Activated B cell treated with CpG ODN at 0.5 μM for 24 hours (primary cell): ENCODE measurements at regions of chr7 and their contacts with region 1.

Region 1: DNA sequence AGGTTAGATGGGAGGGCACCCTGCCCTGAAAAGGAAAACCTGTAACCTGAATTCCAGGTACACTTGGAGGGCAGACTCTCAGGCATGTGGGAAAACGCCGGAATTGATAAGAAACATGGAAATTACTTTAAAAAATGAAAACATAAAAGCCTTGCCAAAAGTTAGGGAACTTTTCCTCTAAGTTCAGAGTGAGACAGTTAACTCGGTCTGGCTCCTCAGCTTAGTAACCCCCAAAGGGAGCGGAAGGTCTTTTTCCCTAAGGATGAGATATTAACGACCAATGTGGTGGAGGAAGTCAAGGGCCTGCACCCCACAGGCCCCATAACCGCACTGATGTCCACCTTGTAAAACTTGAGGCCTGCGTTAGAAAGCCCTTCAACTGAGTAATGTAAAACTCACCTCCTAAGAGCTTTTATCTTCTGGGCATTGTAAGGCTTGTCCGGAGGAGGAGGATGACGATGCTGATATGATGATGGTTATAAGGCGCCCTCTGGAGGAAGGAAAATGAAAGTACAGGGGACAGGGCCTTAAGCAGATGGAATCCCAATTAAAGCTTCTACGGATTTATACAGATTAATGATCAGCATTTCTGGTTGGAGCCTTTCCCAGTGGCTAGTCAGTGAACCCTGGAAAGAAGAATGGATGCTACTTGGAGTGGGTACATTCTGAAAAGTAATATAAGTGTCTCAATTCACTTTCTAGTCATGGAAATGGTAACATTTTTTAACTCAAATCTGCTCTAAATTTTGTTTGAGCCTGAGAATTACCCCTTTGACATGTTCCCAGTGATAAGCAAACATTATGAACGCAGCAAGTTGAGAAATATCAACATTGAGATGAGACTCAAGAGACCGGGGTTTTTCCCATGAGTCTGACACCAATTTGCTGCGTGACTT is 694 bp downstream of the COL1A2 start:
- DNase-seq: no peak
- ATAC-seq: peak; percentile 91
- H3K4me3 Mint-ChIP-seq: peak overlapping the region; percentile 67
- H3K27ac Mint-ChIP-seq: no peak overlapping the region
- H3K4me1 Mint-ChIP-seq: peaks cover 11% of the 10 kb centered on the region
- H3K27me3 Mint-ChIP-seq: peaks cover 30% of the 10 kb centered on the region
- CTCF ChIP-seq: peak; percentile 75

Region 2: GRCh38 chr7:93245525-93246432 is 1149.6 kb before region 1 on chr7:
- CTCF ChIA-PET with region 1: interaction called, 5 read pairs
- POLR2A ChIA-PET with region 1: no interaction called
- intact Hi-C with region 1: loop called (anchors 1 kb)
- DNase-seq: no peak
- ATAC-seq: peak; percentile 25
- H3K4me3 Mint-ChIP-seq: no peak overlapping the region
- H3K27ac Mint-ChIP-seq: no peak overlapping the region
- H3K4me1 Mint-ChIP-seq: peaks cover 2% of the 10 kb centered on the region
- H3K27me3 Mint-ChIP-seq: no peaks in the 10 kb centered on the region
- CTCF ChIP-seq: peak; percentile 42

Region 3: GRCh38 chr7:93461350-93461749 is 934.0 kb before region 1 on chr7:
- CTCF ChIA-PET with region 1: no interaction called
- POLR2A ChIA-PET with region 1: no interaction called
- intact Hi-C with region 1: loop called (anchors 1 kb)
- DNase-seq: no peak
- ATAC-seq: no peak
- H3K4me3 Mint-ChIP-seq: no peak overlapping the region
- H3K27ac Mint-ChIP-seq: no peak overlapping the region
- H3K4me1 Mint-ChIP-seq: no peaks in the 10 kb centered on the region
- H3K27me3 Mint-ChIP-seq: peaks cover 2% of the 10 kb centered on the region
- CTCF ChIP-seq: no peak

Region 4: DNA sequence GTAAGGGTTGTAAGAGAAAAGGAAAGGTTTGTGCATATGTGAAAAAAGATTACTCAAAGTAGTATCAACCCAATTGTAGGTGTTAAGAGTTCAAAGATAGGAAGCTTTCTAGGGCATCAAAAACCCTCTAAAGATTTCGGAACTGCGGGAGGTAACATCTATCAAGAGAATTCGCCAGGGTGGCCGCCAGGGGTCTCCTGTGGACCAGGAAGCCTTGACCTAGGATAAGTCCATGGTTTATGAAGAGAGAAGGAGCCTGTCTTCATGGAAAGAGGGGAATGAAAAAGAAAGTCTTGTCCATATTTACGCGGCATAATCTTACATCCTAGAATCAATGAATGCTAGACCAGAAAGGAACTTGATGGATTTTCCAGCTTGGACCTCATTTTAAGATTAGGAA is 680.2 kb before region 1 on chr7:
- CTCF ChIA-PET with region 1: interaction called, 14 read pairs
- POLR2A ChIA-PET with region 1: no interaction called
- intact Hi-C with region 1: loop called (anchors 1 kb)
- DNase-seq: peak; percentile 14
- ATAC-seq: no peak
- H3K4me3 Mint-ChIP-seq: no peak overlapping the region
- H3K27ac Mint-ChIP-seq: no peak overlapping the region
- H3K4me1 Mint-ChIP-seq: no peaks in the 10 kb centered on the region
- H3K27me3 Mint-ChIP-seq: peaks cover 10% of the 10 kb centered on the region
- CTCF ChIP-seq: no peak

Region 5: DNA sequence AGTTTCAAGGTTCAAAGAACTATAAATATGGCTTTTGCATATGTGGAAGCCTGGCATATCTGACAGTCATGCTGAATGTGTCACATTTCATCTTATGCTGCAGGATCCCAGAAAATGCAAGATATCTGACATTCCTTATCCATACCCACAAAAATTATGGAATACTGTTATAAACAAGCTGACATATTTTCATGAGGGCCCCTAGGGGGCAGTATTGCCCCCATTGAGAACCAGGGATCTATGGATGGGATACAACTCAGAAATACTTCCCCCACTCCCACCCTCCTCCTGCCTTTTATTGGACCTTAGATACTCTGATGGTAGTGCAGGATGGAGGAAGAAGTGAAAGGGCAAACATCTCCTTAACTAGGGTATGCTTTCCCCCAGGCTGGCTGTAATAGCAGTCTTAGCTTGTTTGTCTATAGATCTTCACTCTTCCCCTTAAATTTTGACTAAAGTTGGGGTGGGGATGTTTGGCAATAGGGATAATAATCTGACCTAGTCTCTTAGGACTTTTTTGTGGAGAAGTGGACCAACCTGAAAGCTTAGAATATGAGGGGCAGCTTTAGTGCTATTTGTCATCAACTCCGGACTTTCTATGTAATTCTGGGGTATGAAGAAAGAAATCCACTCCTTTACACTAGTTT is 492.5 kb before region 1 on chr7:
- CTCF ChIA-PET with region 1: interaction called, 17 read pairs
- POLR2A ChIA-PET with region 1: no interaction called
- intact Hi-C with region 1: loop called (anchors 1 kb)
- DNase-seq: no peak
- ATAC-seq: no peak
- H3K4me3 Mint-ChIP-seq: no peak overlapping the region
- H3K27ac Mint-ChIP-seq: no peak overlapping the region
- H3K4me1 Mint-ChIP-seq: no peaks in the 10 kb centered on the region
- H3K27me3 Mint-ChIP-seq: peaks cover 17% of the 10 kb centered on the region
- CTCF ChIP-seq: peak; percentile 74

Region 6: GRCh38 chr7:94080551-94080950 is 314.8 kb before region 1 on chr7:
- CTCF ChIA-PET with region 1: no interaction called
- POLR2A ChIA-PET with region 1: no interaction called
- intact Hi-C with region 1: no loop called
- DNase-seq: no peak
- ATAC-seq: no peak
- H3K4me3 Mint-ChIP-seq: no peak overlapping the region
- H3K27ac Mint-ChIP-seq: no peak overlapping the region
- H3K4me1 Mint-ChIP-seq: no peaks in the 10 kb centered on the region
- H3K27me3 Mint-ChIP-seq: no peaks in the 10 kb centered on the region
- CTCF ChIP-seq: no peak

Region 7: DNA sequence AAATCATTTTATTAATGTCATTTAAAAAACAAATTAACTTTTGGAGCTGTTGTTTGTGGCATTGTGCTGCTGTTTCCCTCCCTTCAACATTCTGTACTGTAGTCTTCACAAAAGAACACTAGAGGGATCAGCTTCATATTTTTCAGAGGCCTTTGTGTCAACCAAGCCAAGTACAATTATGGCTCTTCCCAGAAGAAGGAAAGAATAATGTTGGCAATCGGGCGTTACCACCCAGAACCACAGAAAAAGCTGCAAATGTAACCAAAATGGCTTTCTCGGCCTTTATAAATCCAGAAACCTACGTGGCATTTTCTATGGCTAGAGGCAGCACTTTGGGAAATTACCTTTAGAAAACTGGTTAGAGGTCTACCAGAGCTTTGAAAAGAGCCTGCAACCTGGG is 99.5 kb before region 1 on chr7:
- CTCF ChIA-PET with region 1: no interaction called
- POLR2A ChIA-PET with region 1: no interaction called
- intact Hi-C with region 1: loop called (anchors 5 kb)
- DNase-seq: no peak
- ATAC-seq: no peak
- H3K4me3 Mint-ChIP-seq: no peak overlapping the region
- H3K27ac Mint-ChIP-seq: no peak overlapping the region
- H3K4me1 Mint-ChIP-seq: no peaks in the 10 kb centered on the region
- H3K27me3 Mint-ChIP-seq: peaks cover 10% of the 10 kb centered on the region
- CTCF ChIP-seq: no peak

Region 8: DNA sequence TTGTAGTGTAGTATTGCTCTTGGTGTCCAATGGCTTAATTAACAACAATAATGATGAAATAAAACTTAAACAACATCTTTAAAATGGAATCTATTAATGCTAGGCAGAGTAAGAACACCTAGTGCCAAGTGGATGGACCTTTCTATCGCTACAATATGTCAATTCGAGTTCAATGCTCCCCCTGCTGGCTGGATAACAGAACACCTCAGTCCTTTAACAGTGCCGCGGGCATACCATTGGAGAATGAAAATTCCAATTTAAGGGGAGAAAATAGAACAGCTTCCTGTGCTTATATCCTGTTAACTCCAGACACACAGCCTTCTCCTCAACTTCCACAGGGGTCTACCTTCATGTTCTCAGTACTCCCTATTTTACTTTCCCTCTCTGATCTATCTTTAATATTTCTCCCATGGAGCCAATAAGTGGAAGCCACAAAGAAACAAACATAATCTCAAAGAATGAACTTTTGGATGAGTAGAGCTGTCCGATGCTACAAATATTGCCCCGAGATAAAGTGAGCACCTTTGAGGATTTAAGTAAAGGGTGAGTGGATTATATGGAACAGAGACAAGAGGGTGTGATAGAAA is 40.7 kb after region 1 on chr7:
- CTCF ChIA-PET with region 1: no interaction called
- POLR2A ChIA-PET with region 1: no interaction called
- intact Hi-C with region 1: loop called (anchors 5 kb)
- DNase-seq: no peak
- ATAC-seq: peak; percentile 71
- H3K4me3 Mint-ChIP-seq: no peak overlapping the region
- H3K27ac Mint-ChIP-seq: no peak overlapping the region
- H3K4me1 Mint-ChIP-seq: no peaks in the 10 kb centered on the region
- H3K27me3 Mint-ChIP-seq: peaks cover 13% of the 10 kb centered on the region
- CTCF ChIP-seq: peak; percentile 81